Mammary epithelial cell (primary cell): ENCODE measurements at regions of chr2 and their contacts with region 1.

Region 1: DNA sequence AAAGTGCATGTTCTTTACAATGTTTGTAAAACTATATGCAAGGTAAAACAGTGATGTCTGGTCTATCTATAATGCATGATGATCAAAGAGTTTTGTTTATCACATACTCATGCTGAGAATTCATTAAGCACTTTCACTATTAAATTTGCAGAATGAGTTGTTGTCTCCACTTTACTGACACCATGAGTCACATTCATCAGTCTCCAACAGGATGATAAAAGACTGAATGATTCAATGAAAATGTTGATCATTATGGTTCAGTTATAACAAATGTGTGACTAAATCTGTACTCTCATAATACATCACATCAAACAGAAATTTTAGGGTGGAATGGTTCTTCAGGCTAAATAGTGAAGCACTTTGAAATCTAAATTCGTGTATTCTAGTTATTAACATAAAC is 129.0 kb downstream of the ERBB4 start:
- DNase-seq: peak; percentile 7
- H3K4me3 ChIP-seq: no peak overlapping the region
- H3K27ac ChIP-seq: no peak overlapping the region
- H3K4me1 ChIP-seq: no peaks in the 10 kb centered on the region
- H3K27me3 ChIP-seq: no peaks in the 10 kb centered on the region
- CTCF ChIP-seq: no peak

Region 2: GRCh38 chr2:212477571-212477970 is 68.0 kb after region 1 on chr2:
- CTCF ChIA-PET with region 1: no interaction called
- dilution Hi-C with region 1: loop called (anchors 5 kb)
- in situ Hi-C with region 1: no loop called
- intact Hi-C with region 1: no loop called
- DNase-seq: no peak
- H3K4me3 ChIP-seq: no peak overlapping the region
- H3K27ac ChIP-seq: no peak overlapping the region
- H3K4me1 ChIP-seq: no peaks in the 10 kb centered on the region
- H3K27me3 ChIP-seq: no peaks in the 10 kb centered on the region
- CTCF ChIP-seq: no peak